Thyroid gland (tissue), 4 donors: ENCODE measurements at regions of chr7 and their contacts with region 1.

Region 1: DNA sequence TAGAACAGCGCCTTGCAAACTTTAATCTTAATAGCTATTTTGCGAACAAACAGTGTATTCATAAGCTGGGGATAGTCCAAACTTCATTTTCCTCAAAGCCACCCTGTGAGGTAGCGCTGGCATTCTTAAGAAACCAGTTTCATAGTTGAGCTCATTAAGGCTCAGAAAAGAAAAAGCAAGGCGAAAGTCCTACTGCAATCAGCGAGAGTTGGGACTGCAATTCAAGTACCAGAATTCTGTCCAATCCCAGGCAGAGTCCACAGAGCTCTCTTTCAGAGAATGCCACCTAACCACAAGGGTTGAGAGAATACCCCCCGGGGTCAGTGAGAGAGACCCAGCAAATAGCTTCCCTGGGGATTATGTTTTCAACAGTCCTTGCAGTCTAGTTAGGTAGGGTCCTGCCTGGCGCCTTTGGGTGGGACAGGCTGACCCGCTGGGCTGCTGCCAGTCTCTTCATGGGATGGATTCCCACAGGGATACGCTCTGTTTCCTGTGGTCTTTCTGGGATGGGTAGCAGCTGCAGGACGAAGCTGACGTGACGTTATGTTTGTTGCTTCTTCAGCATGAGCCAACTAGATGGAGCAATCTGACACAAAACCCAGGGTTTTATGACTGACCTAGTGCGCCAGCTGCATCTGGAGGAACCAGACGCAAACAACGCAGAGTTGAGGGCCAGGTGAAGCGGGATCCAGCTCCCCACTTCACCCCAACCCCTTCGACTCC is 16.0 kb downstream of the BMPER start:
- DNase-seq: no peak
- H3K4me3 ChIP-seq: no peak overlapping the region
- H3K27ac ChIP-seq: no peak overlapping the region
- H3K4me1 ChIP-seq: no peaks in the 10 kb centered on the region
- H3K27me3 ChIP-seq: no peaks in the 10 kb centered on the region
- CTCF ChIP-seq: no peak
- POLR2A ChIP-seq: no peak

Region 2: DNA sequence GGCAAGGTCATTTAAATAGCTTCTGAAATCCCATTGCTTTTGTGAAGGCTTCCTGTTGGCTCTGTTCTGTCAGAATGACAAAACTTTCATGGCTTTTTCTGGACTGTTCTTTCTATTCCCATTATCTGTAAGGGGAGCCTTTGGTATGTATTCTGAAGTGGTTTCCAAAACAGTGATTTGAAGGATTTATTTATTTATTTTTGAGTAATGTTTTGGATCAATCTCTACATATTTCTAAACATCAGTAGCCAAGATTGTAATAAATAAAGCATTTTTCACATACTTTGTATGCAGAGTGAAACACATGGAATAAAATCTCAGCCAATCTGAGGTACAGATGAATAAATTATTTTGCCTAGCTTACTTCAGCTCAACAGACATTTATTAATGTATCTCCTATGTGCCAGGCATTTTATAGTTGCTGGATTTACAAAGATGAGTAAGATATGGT is 670.9 kb before region 1 on chr7:
- intact Hi-C with region 1: loop called (anchors 10 kb)
- DNase-seq: no peak
- H3K4me3 ChIP-seq: no peak overlapping the region
- H3K27ac ChIP-seq: no peak overlapping the region
- H3K4me1 ChIP-seq: no peaks in the 10 kb centered on the region
- H3K27me3 ChIP-seq: no peaks in the 10 kb centered on the region
- CTCF ChIP-seq: no peak
- POLR2A ChIP-seq: no peak